Upper lobe of right lung (tissue), 1 donor: ENCODE measurements at regions of chr11 and their contacts with region 1.

Region 1: GRCh38 chr11:68447015-68447801 is 13.3 kb upstream of the PPP6R3 start:
- DNase-seq: peak; percentile 88
- ATAC-seq: peak; percentile 95
- H3K4me3 ChIP-seq: no peak overlapping the region
- H3K27ac ChIP-seq: no peak overlapping the region
- H3K4me1 ChIP-seq: no peaks in the 10 kb centered on the region
- H3K27me3 ChIP-seq: no peaks in the 10 kb centered on the region
- CTCF ChIP-seq: peak; percentile 93

Region 2: DNA sequence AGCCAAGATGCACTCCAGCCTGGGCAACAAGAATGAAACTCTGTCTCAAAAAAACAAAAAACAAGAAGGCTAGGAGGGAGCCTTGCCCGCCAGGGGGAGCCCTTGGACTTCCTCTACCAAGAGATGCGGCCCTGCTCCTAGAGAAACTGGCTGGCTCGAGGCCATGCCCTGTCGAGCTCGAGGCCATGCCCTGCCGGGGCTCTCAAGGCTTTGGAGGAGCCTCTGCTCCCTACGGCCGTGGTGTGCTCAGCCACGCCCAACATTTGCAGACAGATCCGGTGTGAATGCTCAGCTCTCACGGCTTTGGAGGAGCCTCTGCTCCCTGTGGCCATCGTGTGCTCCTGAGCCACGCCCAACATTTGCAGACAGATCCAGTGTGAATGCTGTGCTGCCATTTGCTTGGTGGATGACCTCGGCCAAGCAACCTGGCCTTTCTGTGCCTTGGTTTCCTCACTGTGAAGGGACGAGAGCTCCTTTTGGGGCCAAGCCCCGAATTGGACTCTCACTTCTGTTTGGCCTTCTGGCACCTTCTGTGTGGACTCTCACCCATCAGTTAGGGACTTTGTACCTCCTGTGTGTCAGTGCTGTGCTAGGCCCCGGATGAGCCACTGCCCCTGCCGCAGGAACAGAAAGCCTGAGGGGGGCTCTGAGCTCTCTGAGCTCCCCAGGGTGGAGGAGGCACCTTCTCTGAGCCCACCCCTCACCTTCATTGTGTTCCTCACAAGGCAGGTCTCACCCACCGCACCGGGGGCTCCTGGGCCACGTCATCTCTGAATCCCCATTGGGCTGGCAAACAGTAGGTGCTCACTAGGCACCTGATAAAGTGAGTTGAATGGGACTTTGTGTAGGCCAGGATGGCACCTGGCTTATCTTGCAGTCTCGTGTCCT is 189.5 kb before region 1 on chr11:
- intact Hi-C with region 1: loop called (anchors 5 kb)
- DNase-seq: peak; percentile 99
- ATAC-seq: peak; percentile 95
- H3K4me3 ChIP-seq: no peak overlapping the region
- H3K27ac ChIP-seq: no peak overlapping the region
- H3K4me1 ChIP-seq: peaks cover 9% of the 10 kb centered on the region
- H3K27me3 ChIP-seq: no peaks in the 10 kb centered on the region
- CTCF ChIP-seq: peak; percentile 90

Region 3: GRCh38 chr11:68338051-68338780 is 109.0 kb before region 1 on chr11:
- intact Hi-C with region 1: no loop called
- DNase-seq: no peak
- ATAC-seq: no peak
- H3K4me3 ChIP-seq: no peak overlapping the region
- H3K27ac ChIP-seq: no peak overlapping the region
- H3K4me1 ChIP-seq: peaks cover 75% of the 10 kb centered on the region
- H3K27me3 ChIP-seq: no peaks in the 10 kb centered on the region
- CTCF ChIP-seq: no peak